ENCODE measurements at regions of chr19 and their contacts with region 1.

Region 1: DNA sequence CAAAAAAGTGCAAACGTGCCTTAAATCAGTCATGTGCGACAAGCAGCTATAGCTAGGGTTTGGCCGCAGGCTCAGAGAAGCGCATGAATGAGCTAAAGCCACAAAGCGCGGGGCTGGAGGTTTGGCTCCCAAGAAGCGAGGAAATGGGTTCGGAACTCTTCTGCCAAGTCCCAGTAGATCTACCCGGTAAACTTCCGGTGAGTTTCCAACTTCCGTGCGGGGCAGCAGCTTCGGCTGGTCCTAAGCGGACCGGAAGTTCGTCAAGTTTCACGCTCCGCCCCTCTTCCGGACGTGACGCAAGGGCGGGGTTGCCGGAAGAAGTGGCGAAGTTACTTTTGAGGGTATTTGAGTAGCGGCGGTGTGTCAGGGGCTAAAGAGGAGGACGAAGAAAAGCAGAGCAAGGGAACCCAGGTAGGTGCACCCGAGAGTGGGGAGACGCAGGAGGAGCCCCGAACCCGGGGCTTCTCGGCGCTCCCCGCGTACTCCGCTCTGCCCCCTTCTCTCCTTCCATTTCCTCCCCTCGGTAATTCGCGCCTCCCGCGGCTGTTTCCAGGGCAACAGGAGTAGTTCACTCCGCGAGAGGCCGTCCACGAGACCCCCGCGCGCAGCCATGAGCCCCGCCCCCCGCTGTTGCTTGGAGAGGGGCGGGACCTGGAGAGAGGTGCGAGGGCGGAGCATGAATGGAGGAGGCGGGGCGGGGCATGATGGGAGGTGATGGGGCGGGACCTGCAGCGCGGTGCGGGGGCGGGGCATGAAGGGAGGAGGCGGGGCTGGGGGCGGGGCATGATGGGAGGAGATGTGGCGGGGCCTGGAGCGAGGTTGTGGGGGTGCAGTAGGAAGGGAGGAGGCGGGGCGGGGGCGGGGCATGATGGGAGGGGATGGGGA is at the start of gene NR1H2:
- DNase-seq: peak; percentile 99
- ATAC-seq: peak; percentile 91
- H3K4me3 ChIP-seq: peak within 1 kb of the TSS; percentile 72
- H3K27ac ChIP-seq: peak within 1 kb of the TSS; percentile 91
- H3K4me1 ChIP-seq: peaks cover 14% of the 10 kb centered on the region
- H3K27me3 ChIP-seq: no peaks in the 10 kb centered on the region
- CTCF ChIP-seq: no peak
- total RNA-seq, gene NR1H2: 130 and 152 TPM in 2 replicates

Region 2: GRCh38 chr19:50511068-50511822 is 134.8 kb after region 1 on chr19 and contains the start of gene JOSD2:
- CTCF ChIA-PET with region 1: no interaction called
- POLR2A ChIA-PET with region 1: interaction called, 5 read pairs
- intact Hi-C with region 1: loop called (anchors 1 kb)
- DNase-seq: peak; percentile 99
- ATAC-seq: peak; percentile 98
- H3K4me3 ChIP-seq: peak within 1 kb of the TSS; percentile 84
- H3K27ac ChIP-seq: peak within 1 kb of the TSS; percentile 20
- H3K4me1 ChIP-seq: 0 out of 2 replicates have a peak, but pooled peaks cover 7% of the 10 kb centered on the region
- H3K27me3 ChIP-seq: no peaks in the 10 kb centered on the region
- CTCF ChIP-seq: no peak
- total RNA-seq, gene JOSD2: 60.8 and 71.5 TPM in 2 replicates

Measured in PC-3 (cell line).